HepG2 (cell line): ENCODE measurements at regions of chr11 and their contacts with region 1.

Region 1: DNA sequence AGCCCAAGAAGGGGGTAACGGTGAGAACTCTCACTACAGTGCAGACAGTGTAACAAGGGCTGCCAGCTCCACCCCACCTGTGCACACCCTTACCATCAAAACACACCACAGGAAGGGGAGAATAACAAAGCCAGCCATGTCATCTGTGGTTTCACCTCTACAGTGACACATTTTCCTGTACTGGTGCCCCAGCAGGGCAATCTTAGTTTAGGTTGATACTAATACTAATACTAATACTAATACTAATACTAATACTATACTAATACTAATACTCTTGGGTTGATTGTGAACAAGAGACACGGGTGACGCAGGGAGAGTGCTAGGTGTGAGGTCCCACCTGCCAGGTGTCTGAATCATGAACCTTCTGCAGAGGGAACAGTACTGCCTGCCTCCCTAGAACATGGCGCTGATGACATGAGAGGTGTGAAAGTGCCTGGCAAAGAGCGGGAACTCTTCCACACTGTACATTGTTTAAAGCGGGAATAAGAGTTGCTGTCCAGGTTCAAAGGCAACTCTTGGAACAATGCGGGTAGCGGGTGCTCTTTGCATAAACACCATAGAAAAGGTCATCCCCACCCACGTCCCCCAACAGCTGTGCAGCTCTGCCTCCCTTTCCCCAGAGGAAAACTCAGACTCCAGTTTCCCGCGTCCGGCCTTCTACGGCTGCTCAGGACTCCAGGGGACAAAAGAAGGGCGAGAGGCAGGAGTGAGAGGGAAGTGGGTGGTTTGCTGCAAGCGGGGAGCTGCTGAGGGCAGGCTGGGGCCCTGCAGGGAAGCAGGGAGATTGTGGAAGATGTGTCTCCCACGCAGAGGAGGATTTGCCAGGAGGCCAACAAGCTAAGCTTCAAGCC is 25.0 kb upstream of the TMPRSS4 start:
- DNase-seq: no peak
- ATAC-seq: no peak
- H3K4me3 ChIP-seq: no peak overlapping the region
- H3K27ac ChIP-seq: no peak overlapping the region
- H3K4me1 ChIP-seq: no peaks in the 10 kb centered on the region
- H3K27me3 ChIP-seq: peaks cover 0 to 36% of the 10 kb centered on the region in 2 experiments; a peak in 2 of 5 replicates
- CTCF ChIP-seq: no peak
- EP300 ChIP-seq: no peak
- POLR2A ChIP-seq: no peak
- RAD21 ChIP-seq: no peak

Region 2: GRCh38 chr11:117781627-117782026 is 270.2 kb before region 1 on chr11:
- CTCF ChIA-PET with region 1: no interaction called
- POLR2A ChIA-PET with region 1: no interaction called
- in situ Hi-C with region 1: no loop called
- intact Hi-C with region 1: no loop called
- DNase-seq: no peak
- ATAC-seq: no peak
- H3K4me3 ChIP-seq: no peak overlapping the region
- H3K27ac ChIP-seq: no peak overlapping the region
- H3K4me1 ChIP-seq: peaks cover 15% of the 10 kb centered on the region
- H3K27me3 ChIP-seq: peaks cover 5 to 6% of the 10 kb centered on the region in 2 experiments; a peak in 3 of 5 replicates
- CTCF ChIP-seq: no peak
- EP300 ChIP-seq: no peak
- POLR2A ChIP-seq: no peak
- RAD21 ChIP-seq: no peak

Region 3: DNA sequence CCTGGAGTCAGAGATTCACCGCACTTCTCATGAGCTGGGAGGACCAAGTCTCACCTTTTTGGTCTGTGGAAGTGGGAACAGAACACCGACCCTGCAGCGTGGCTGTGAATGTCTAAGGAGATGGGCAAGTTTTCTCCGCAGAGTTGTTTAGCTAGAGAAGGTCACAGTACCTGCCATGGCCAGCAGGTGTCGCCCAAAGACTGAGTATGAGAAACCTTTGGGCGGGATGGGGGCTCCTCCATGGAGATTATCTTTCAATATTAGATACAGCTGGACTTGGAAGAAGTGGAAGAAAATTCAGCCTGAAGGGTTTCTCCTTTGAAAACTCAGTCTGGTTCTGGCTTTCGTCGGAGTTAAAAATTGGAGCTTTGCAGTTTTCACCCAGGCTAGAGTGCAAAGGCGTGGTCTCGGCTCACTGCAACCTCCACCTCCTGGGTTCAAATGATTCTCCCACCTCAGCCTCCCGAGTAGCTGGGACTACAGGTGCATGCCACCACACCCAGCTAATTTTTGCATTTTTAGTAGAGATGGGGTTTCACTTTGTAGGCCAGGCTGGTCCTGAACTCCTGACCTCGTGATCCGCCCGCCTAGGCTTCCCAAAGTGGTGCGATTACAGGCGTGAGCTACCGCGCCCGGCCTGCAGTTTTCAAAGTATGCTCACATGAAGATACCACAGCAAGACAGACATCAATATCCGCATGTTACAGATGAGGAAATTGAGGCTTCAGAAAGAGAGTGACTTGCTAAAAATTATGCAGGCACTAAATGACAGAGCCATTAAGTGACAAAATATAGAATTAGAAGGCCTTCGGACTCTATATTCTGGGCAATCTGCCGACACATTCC is 244.1 kb before region 1 on chr11:
- CTCF ChIA-PET with region 1: interaction called, 11 read pairs
- POLR2A ChIA-PET with region 1: no interaction called
- in situ Hi-C with region 1: no loop called
- intact Hi-C with region 1: no loop called
- DNase-seq: no peak
- ATAC-seq: peak; percentile 56
- H3K4me3 ChIP-seq: no peak overlapping the region
- H3K27ac ChIP-seq: no peak overlapping the region
- H3K4me1 ChIP-seq: no peaks in the 10 kb centered on the region
- H3K27me3 ChIP-seq: no peaks in the 10 kb centered on the region; a peak in 1 of 5 replicates
- CTCF ChIP-seq: peak; percentile 80
- EP300 ChIP-seq: no peak
- POLR2A ChIP-seq: no peak
- RAD21 ChIP-seq: peak; percentile 57; the same call in 1 of the 2 replicates

Region 4: GRCh38 chr11:117817368-117818040 is 234.3 kb before region 1 on chr11:
- CTCF ChIA-PET with region 1: interaction called, 3 read pairs
- POLR2A ChIA-PET with region 1: no interaction called
- in situ Hi-C with region 1: no loop called
- intact Hi-C with region 1: loop called (anchors 1 kb)
- DNase-seq: peak; percentile 49
- ATAC-seq: peak; percentile 45
- H3K4me3 ChIP-seq: peak overlapping the region in 1 of 3 experiments; percentile 61; a peak in 1 of 6 replicates
- H3K27ac ChIP-seq: no peak overlapping the region
- H3K4me1 ChIP-seq: peaks cover 73% of the 10 kb centered on the region
- H3K27me3 ChIP-seq: peaks cover 0 to 5% of the 10 kb centered on the region in 2 experiments; a peak in 1 of 5 replicates
- CTCF ChIP-seq: peak; percentile 92
- EP300 ChIP-seq: no peak
- POLR2A ChIP-seq: no peak
- RAD21 ChIP-seq: peak; percentile 71

Region 5: DNA sequence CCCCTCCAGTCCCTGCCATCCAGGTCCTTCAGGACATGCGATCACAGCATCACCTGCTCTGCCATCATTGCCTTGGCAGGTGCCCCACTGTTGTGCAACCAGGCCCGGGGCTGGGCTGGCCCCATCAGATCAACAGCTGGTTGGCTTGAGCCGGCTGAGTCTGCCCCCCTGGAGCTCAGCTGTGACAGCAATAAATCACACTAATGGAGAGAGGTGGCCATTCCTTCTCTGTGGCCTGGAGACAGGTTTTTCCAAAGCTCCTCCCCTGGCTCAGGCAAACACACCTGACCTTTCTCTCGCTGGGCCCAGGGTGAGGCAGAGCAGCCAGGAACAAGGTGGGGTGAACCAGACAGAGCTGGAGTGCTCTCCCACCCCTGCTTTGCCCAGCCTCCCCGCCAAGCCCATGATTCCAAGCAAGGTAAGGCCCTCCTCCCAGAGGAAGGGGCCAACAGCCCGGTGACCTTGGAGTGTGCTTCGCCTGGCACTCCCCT is 218.4 kb before region 1 on chr11:
- CTCF ChIA-PET with region 1: no interaction called
- POLR2A ChIA-PET with region 1: no interaction called
- in situ Hi-C with region 1: loop called (anchors 10 kb)
- intact Hi-C with region 1: no loop called
- DNase-seq: no peak
- ATAC-seq: no peak
- H3K4me3 ChIP-seq: no peak overlapping the region
- H3K27ac ChIP-seq: no peak overlapping the region
- H3K4me1 ChIP-seq: peaks cover 57% of the 10 kb centered on the region
- H3K27me3 ChIP-seq: peaks cover 10 to 49% of the 10 kb centered on the region in 2 experiments; a peak in 4 of 5 replicates
- CTCF ChIP-seq: no peak
- EP300 ChIP-seq: no peak
- POLR2A ChIP-seq: no peak
- RAD21 ChIP-seq: no peak

Region 6: DNA sequence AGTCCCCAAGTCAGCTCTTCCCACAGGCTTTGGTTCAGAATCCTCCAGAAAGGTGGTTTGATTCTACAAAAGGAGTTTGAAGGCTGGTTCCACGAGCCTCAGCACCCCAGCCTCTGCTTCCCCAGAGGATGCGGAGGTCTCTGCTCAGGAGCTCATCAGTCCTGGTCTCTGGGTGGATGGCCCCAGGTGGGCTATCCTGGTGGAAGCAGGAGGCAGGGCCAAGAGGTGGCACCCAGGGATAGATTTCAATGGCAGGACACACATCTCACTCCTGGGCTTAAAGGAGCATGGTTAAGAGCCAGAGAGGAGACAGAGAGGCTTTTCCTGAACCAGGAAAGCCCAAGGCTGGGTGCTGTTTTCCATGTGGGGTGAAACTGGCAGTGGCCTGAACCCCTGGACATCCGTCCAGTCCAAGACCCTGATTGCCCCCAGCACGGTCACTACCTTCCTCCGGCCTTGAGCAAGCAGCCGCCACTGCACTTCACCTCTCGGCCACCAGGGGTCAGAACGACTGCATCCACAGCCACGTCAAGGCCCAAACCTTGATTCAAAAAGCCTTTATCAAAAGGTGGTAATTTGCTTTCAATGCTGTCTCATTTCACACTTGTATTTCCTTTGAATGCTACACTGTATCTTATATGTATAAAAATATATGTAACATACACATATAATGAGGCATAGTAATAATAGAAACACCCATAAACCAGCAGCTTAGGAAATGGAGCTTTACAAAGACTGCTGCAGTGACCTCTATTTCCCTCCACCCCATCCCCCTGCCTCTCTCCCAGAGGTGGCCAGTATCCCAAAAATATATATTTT is 208.0 kb before region 1 on chr11:
- CTCF ChIA-PET with region 1: interaction called, 14 read pairs
- POLR2A ChIA-PET with region 1: no interaction called
- in situ Hi-C with region 1: loop called (anchors 10 kb)
- intact Hi-C with region 1: loop called (anchors 1 kb)
- DNase-seq: no peak
- ATAC-seq: peak; percentile 83
- H3K4me3 ChIP-seq: no peak overlapping the region
- H3K27ac ChIP-seq: no peak overlapping the region
- H3K4me1 ChIP-seq: no peaks in the 10 kb centered on the region
- H3K27me3 ChIP-seq: peaks cover 8 to 27% of the 10 kb centered on the region in 2 experiments; a peak in 3 of 5 replicates
- CTCF ChIP-seq: peak; percentile 91
- EP300 ChIP-seq: no peak
- POLR2A ChIP-seq: no peak
- RAD21 ChIP-seq: peak; percentile 59; the same call in 1 of the 2 replicates